Naive thymus-derived CD4-positive, alpha-beta T cell (primary cell): ENCODE measurements at regions of chr9 and their contacts with region 1.

Region 1: GRCh38 chr9:92954049-92954861 is 6.9 kb downstream of the FGD3 start:
- DNase-seq: peak in 8 of 9 donors; percentile 67 to 92 (median 90)
- ATAC-seq: peak; percentile 93
- H3K4me3 ChIP-seq: peak overlapping the region; percentile 55
- H3K4me3 Mint-ChIP-seq: peak overlapping the region; percentile 79 to 99 (median 86)
- H3K27ac ChIP-seq: peak overlapping the region; percentile 84
- H3K27ac Mint-ChIP-seq: peak overlapping the region; percentile 91 to 100 (median 98)
- H3K4me1 ChIP-seq: peaks cover 52 to 88% of the 10 kb centered on the region in 2 donors
- H3K4me1 Mint-ChIP-seq: peaks cover 58 to 92% (median 84%) of the 10 kb centered on the region in 7 donors
- H3K27me3 ChIP-seq: no peaks in the 10 kb centered on the region
- H3K27me3 Mint-ChIP-seq: peaks cover 0 to 2% (median 0%) of the 10 kb centered on the region in 5 donors

Region 2: GRCh38 chr9:91966503-91966902 is 987.8 kb before region 1 on chr9:
- CTCF ChIA-PET with region 1: no interaction called
- POLR2A ChIA-PET with region 1: no interaction called
- intact Hi-C with region 1: no loop called
- DNase-seq: no peak
- ATAC-seq: no peak
- H3K4me3 ChIP-seq: no peak overlapping the region
- H3K4me3 Mint-ChIP-seq: no peak overlapping the region
- H3K27ac ChIP-seq: no peak overlapping the region
- H3K27ac Mint-ChIP-seq: no peak overlapping the region
- H3K4me1 ChIP-seq: no peaks in the 10 kb centered on the region
- H3K4me1 Mint-ChIP-seq: no peaks in the 10 kb centered on the region
- H3K27me3 ChIP-seq: no peaks in the 10 kb centered on the region
- H3K27me3 Mint-ChIP-seq: peaks cover 24 to 50% (median 37%) of the 10 kb centered on the region in 5 donors

Region 3: GRCh38 chr9:92850884-92851283 is 103.4 kb before region 1 on chr9:
- CTCF ChIA-PET with region 1: interaction called, 10 read pairs
- POLR2A ChIA-PET with region 1: interaction called, 3 read pairs
- intact Hi-C with region 1: loop called in 1 of 2 experiments (anchors 1 kb)
- DNase-seq: peak in 7 of 9 donors; percentile 22 to 46 (median 27)
- ATAC-seq: no peak
- H3K4me3 ChIP-seq: no peak overlapping the region
- H3K4me3 Mint-ChIP-seq: no peak overlapping the region
- H3K27ac ChIP-seq: no peak overlapping the region
- H3K27ac Mint-ChIP-seq: peak overlapping the region in 3 of 9 donors; percentile 8 to 84 (median 42)
- H3K4me1 ChIP-seq: peaks cover 0 to 4% of the 10 kb centered on the region in 2 donors
- H3K4me1 Mint-ChIP-seq: peaks cover 0 to 17% (median 6%) of the 10 kb centered on the region in 7 donors
- H3K27me3 ChIP-seq: no peaks in the 10 kb centered on the region
- H3K27me3 Mint-ChIP-seq: no peaks in the 10 kb centered on the region

Region 4: DNA sequence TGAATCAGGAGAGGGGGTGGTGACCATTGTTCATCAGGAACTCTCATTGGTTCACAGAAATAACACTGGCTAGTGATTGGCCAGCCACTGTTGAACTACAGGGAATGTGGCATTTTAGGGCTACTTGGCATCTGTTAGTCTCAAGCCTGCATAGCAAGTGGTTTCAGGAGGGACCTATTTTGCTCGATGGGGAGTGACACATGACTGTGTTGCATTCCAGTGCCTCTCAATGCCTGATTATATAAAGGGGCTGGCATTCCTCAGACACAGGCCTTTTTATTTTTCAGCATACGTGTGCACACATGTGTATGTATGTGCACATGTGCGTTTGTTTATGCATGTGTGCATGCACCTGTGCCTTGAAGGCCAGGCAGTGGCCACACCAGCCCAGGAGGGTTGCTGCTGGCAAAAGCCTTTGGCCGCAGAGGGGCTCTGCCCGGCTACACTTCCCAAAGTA is 16.2 kb after region 1 on chr9:
- CTCF ChIA-PET with region 1: interaction called, 18 read pairs
- POLR2A ChIA-PET with region 1: interaction called, 214 read pairs
- intact Hi-C with region 1: no loop called
- DNase-seq: no peak
- ATAC-seq: no peak
- H3K4me3 ChIP-seq: peak overlapping the region; percentile 34
- H3K4me3 Mint-ChIP-seq: peak overlapping the region; percentile 86 to 98 (median 93)
- H3K27ac ChIP-seq: peak overlapping the region; percentile 85
- H3K27ac Mint-ChIP-seq: peak overlapping the region; percentile 89 to 99 (median 98)
- H3K4me1 ChIP-seq: peaks cover 71 to 79% of the 10 kb centered on the region in 2 donors
- H3K4me1 Mint-ChIP-seq: peaks cover 67 to 84% (median 82%) of the 10 kb centered on the region in 7 donors
- H3K27me3 ChIP-seq: no peaks in the 10 kb centered on the region
- H3K27me3 Mint-ChIP-seq: no peaks in the 10 kb centered on the region

Region 5: DNA sequence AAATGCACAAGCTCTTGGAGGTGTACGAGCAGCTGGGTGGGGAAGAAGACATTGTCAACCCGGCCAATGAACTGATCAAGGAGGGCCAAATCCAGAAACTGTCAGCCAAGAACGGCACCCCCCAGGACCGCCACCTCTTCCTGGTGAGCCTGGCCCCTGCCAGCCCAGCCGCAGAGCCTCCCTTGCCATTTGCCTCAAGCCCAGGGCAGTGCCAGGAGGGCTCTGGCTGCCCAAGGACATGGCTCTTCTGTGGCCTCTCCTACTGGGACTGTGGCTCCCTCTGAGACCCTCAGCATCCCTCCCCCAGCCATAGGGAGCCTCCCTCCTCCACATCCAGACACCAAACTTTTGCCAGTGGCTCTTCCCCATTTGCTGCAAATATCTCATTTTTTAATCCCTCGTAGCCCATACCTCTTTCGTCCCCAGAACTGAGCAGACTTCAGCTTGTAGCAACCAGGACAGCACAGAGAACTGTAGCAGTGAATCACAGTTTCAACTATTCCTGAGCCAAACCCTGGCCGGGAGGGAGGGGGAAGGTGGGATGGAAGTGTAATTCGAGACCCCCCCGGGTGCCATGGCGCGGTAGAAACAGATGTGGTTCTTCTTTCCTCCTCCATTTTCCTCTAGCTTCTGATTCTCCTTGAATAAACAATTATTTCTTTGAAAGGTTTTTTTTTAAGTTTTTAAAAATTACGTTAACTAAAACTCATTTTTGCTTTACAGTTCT is 59.8 kb after region 1 on chr9:
- CTCF ChIA-PET with region 1: no interaction called
- POLR2A ChIA-PET with region 1: interaction called, 11 read pairs
- intact Hi-C with region 1: no loop called
- DNase-seq: no peak
- ATAC-seq: no peak
- H3K4me3 ChIP-seq: no peak overlapping the region
- H3K4me3 Mint-ChIP-seq: peak overlapping the region in 2 of 10 donors; percentile 14 to 20
- H3K27ac ChIP-seq: peak overlapping the region; percentile 0
- H3K27ac Mint-ChIP-seq: peak overlapping the region in 8 of 9 donors; percentile 27 to 91 (median 84)
- H3K4me1 ChIP-seq: peaks cover 0 to 8% of the 10 kb centered on the region in 2 donors
- H3K4me1 Mint-ChIP-seq: peaks cover 14 to 46% (median 25%) of the 10 kb centered on the region in 7 donors
- H3K27me3 ChIP-seq: no peaks in the 10 kb centered on the region
- H3K27me3 Mint-ChIP-seq: no peaks in the 10 kb centered on the region

Region 6: DNA sequence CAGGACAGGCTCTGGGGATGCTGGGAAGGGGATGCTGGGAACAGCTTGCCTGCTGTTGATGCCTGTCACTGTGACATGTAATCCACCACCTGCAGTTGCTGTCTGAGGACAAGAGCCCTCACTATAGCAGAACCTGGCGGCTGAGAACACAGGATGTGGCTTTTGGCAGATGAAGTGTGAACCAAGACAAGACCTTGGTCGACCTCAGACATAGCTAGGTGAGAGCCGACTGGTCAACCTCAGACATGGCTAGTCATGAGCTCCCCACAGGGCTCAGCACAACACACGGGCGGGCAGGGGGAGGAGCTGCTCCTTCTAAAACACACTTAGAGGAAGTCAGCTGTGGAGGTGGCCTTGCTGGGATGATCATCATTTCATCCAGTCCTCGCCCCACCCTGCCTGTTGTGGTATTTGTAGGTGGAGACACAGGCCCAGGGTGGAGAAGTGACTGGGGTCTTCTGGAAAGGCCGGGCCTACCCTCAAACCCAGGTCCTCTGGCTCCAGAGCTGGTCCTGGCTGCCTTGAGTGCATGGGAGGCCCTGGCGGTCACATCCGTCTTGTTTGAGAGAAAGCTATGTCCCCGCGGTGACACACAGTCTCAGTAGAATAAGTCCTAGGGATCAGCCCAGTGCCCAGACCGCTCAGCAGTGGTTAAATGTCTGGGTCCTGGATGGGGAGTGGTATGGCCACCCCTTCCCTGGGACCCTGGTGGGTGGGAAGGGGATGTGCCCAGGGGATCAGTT is 110.3 kb after region 1 on chr9:
- CTCF ChIA-PET with region 1: interaction called, 8 read pairs
- POLR2A ChIA-PET with region 1: interaction called, 19 read pairs
- intact Hi-C with region 1: loop called in 1 of 2 experiments (anchors 1 kb)
- DNase-seq: peak; percentile 54 to 95 (median 90)
- ATAC-seq: peak; percentile 96
- H3K4me3 ChIP-seq: peak overlapping the region; percentile 90
- H3K4me3 Mint-ChIP-seq: peak overlapping the region; percentile 87 to 97 (median 92)
- H3K27ac ChIP-seq: peak overlapping the region; percentile 88
- H3K27ac Mint-ChIP-seq: peak overlapping the region; percentile 97 to 100 (median 99)
- H3K4me1 ChIP-seq: peaks cover 63 to 87% of the 10 kb centered on the region in 2 donors
- H3K4me1 Mint-ChIP-seq: peaks cover 71 to 95% (median 86%) of the 10 kb centered on the region in 7 donors
- H3K27me3 ChIP-seq: no peaks in the 10 kb centered on the region
- H3K27me3 Mint-ChIP-seq: no peaks in the 10 kb centered on the region

Region 7: DNA sequence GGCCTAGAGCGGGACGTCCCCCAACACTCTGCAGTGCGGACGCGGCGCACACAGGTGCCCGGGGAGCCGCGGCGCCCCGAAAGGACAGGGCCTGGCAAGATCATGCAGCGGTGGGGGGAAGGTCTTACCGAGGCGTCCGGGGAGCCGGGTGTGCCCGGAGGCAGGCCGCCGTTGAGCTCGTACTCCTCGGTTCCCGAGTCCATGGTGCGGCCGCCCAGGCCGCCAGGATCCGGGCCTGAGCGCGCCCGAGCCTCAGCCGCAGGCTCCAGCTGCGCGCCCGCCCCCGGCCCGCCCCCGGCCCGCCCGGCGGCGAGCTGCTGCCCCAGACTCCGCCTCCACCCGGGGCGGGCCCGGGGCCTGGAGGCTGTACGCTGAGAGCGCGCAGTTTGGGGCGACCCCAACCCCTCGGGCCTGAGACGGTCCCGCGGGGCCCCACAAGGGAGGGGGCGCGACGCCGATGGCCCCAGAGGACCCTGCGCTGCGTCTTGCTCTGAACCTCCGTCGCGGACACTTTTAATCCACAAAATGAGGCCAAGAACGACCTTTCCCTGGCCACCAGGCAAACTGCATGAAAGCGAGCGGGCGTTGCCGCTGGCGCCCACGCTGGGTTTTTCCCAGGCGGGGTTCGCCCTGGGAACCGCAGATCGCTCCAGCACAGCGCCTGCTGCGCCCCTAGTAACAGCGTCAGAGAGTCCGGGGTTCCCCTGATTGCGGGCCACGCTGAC is 179.9 kb after region 1 on chr9 and contains the start of gene NINJ1:
- CTCF ChIA-PET with region 1: interaction called, 3 read pairs
- POLR2A ChIA-PET with region 1: interaction called, 14 read pairs
- intact Hi-C with region 1: no loop called
- DNase-seq: peak; percentile 72 to 93 (median 83)
- ATAC-seq: peak; percentile 87
- H3K4me3 ChIP-seq: peak within 1 kb of the TSS; percentile 68
- H3K4me3 Mint-ChIP-seq: peak within 1 kb of the TSS; percentile 87 to 92 (median 90)
- H3K27ac ChIP-seq: peak within 1 kb of the TSS; percentile 99
- H3K27ac Mint-ChIP-seq: peak within 1 kb of the TSS; percentile 84 to 98 (median 98)
- H3K4me1 ChIP-seq: peaks cover 27 to 55% of the 10 kb centered on the region in 2 donors
- H3K4me1 Mint-ChIP-seq: peaks cover 40 to 80% (median 63%) of the 10 kb centered on the region in 7 donors
- H3K27me3 ChIP-seq: no peaks in the 10 kb centered on the region
- H3K27me3 Mint-ChIP-seq: no peaks in the 10 kb centered on the region
- total RNA-seq, gene NINJ1: 30.7 to 163 (median 64.7) TPM

Region 8: DNA sequence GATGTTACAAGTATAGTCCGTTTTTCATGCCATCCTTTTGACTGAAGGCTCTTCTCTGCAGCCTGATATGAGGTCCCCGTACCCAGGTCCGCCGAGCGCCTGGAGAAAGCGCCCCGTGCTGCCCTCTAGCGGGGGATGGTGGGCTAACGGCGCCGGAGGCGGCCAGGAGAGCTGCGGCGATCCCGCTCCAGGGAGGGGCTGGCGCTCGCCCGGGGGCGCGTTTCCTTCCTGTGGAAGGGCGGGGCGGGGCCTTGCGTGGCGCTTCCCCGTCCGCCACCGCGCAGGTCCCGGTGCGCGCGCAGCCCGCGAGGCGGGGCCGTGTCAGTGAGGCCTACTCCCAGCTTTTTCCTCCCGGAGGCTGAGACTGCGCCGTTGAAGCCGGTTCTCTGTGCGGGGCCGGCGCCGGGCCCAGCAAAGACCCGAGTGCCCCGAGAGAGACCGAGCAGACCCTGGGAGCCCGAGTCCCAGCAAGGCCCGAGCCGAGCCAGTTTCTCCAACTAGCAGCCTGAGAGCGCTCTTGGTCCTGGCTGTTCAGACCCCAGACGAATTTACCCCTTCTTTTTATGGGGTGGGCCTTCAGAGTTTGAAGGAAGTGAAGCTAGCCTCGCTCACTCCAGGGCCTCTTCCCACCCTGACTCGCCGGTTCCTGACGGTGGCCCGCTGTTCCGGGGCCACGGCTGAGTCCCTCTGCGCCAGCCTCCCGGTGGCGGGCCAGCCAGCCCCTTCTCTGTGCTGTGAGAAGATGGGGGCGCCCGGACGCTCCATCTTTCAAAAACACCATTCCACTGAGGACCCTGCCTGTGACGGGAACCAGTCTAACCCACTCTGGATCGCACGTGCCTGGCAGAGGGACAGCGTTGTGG is 612.4 kb after region 1 on chr9:
- CTCF ChIA-PET with region 1: interaction called, 3 read pairs
- POLR2A ChIA-PET with region 1: no interaction called
- intact Hi-C with region 1: loop called in 1 of 2 experiments (anchors 2 kb)
- DNase-seq: peak; percentile 94 to 100 (median 99)
- ATAC-seq: peak; percentile 99
- H3K4me3 ChIP-seq: peak overlapping the region; percentile 76
- H3K4me3 Mint-ChIP-seq: peak overlapping the region; percentile 80 to 91 (median 86)
- H3K27ac ChIP-seq: peak overlapping the region; percentile 92
- H3K27ac Mint-ChIP-seq: peak overlapping the region; percentile 84 to 96 (median 93)
- H3K4me1 ChIP-seq: peaks cover 8 to 9% of the 10 kb centered on the region in 2 donors
- H3K4me1 Mint-ChIP-seq: peaks cover 10 to 25% (median 20%) of the 10 kb centered on the region in 7 donors
- H3K27me3 ChIP-seq: no peaks in the 10 kb centered on the region
- H3K27me3 Mint-ChIP-seq: no peaks in the 10 kb centered on the region